ENCODE measurements at regions of chr12 and their contacts with region 1.

Region 1: DNA sequence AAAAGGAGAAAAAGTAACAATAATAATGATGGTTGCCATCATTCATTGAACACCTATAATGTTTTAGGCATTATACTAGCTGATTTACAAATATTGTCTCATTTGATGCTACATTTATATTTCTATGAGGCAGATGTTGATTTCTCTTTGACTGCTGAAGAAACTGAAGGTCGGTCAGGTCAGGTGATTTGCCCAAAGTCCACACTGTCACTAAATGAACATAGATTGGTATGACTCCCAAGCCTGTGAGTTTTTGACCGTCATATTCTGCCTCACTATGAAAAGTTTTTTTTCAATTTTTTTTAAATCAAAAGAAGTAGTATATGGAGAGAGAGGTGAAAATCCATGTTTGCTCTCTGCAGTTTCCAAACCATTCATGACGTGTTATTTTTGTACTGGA is 10.8 kb downstream of the ALG10B start:
- DNase-seq: no peak
- H3K4me3 ChIP-seq: no peak overlapping the region
- H3K27ac ChIP-seq: no peak overlapping the region
- H3K4me1 ChIP-seq: peaks cover 0 to 2% (median 0%) of the 10 kb centered on the region in 4 experiments
- H3K27me3 ChIP-seq: no peaks in the 10 kb centered on the region

Region 2: DNA sequence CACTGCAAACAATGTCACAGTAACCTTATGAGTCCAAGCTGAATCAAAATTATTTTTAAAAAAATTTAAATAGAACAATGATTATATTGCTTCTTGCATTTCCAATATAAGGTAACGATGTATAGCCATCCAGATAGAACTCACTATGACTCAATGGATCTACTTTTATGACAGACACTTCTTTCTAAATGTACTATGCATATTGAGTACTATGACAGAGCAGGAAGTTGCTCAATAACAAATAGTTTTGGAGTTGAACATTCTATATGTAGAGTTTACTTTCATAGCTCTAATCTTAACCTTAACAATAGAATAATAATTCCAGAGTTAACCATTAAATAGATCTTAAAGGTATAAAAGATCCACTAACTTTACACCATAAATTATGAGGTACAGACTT is 57.5 kb before region 1 on chr12:
- CTCF ChIA-PET with region 1: no interaction called
- POLR2A ChIA-PET with region 1: no interaction called
- DNase-seq: no peak
- H3K4me3 ChIP-seq: no peak overlapping the region
- H3K27ac ChIP-seq: no peak overlapping the region
- H3K4me1 ChIP-seq: no peaks in the 10 kb centered on the region
- H3K27me3 ChIP-seq: no peaks in the 10 kb centered on the region

Region 3: GRCh38 chr12:39103552-39104165 is 776.3 kb after region 1 on chr12:
- CTCF ChIA-PET with region 1: interaction called, 37 read pairs
- POLR2A ChIA-PET with region 1: no interaction called
- DNase-seq: peak; percentile 50 to 76 (median 74)
- H3K4me3 ChIP-seq: no peak overlapping the region
- H3K27ac ChIP-seq: no peak overlapping the region
- H3K4me1 ChIP-seq: no peaks in the 10 kb centered on the region
- H3K27me3 ChIP-seq: no peaks in the 10 kb centered on the region